Activated B cell treated with CpG ODN at 0.5 μM for 24 hours (primary cell): ENCODE measurements at regions of chr10 and their contacts with region 1.

Region 1: DNA sequence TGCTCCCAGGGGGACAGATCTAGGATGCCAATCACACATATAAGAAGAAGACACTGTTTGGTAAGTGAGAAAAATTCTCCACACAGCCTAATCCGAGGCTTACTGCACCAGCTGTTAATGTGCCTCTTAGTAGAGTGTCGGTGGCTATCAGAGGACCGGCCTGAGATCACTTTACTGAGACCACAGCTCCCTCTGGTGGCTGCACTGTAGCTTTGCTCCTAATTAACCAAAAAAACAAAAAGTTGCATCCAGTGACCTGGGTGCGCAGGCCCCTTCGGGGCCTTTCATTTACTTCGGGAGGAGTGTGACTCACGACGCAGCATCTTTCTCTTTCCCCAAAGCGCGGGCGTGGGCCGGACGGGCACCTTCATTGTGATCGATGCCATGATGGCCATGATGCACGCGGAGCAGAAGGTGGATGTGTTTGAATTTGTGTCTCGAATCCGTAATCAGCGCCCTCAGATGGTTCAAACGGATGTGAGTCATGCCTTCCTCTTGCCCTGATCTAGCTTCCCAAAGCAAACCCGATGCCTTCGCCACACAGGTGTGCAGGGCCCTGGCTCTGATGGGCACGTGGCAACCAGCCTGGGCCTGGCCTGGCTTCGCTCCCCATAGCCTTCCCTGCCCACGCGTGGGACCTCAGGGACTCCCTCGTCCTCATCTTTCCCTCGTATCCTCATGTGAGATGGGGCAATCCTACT is 56.7 kb downstream of the MKI67 start:
- DNase-seq: peak; percentile 67
- ATAC-seq: peak; percentile 13
- H3K4me3 Mint-ChIP-seq: no peak overlapping the region
- H3K27ac Mint-ChIP-seq: no peak overlapping the region
- H3K4me1 Mint-ChIP-seq: peaks cover 34% of the 10 kb centered on the region
- H3K27me3 Mint-ChIP-seq: no peaks in the 10 kb centered on the region
- CTCF ChIP-seq: no peak

Region 2: DNA sequence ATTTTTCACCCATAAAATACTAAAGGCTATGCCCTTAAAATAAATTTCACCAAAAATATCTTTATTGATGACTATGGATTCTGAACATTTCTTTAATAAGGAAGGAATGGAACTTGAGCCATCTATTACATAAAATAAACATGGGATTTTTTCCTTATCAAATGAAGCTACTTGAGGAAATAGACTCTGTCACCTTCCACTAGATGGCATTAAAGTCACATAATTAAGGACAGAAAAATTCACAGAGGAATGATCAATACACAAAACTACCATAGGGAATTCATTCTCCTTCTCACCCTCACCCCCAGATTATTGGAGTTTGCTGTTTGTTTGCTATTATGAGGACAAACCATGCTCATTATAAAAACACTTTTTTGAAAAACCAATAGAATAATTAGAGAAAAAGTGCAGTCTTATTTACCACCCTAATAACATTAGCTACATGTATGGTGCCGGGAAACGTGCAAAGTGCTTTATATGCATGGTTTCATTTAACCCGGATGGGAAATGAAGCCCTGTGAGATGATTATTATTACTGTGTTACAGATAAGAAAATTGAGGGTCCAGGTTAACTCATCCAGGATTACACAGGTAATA is 353.6 kb before region 1 on chr10:
- CTCF ChIA-PET with region 1: interaction called, 20 read pairs
- POLR2A ChIA-PET with region 1: no interaction called
- intact Hi-C with region 1: no loop called
- DNase-seq: no peak
- ATAC-seq: no peak
- H3K4me3 Mint-ChIP-seq: no peak overlapping the region
- H3K27ac Mint-ChIP-seq: no peak overlapping the region
- H3K4me1 Mint-ChIP-seq: no peaks in the 10 kb centered on the region
- H3K27me3 Mint-ChIP-seq: no peaks in the 10 kb centered on the region
- CTCF ChIP-seq: no peak

Region 3: GRCh38 chr10:127906548-127907377 is 162.7 kb before region 1 on chr10 and contains the start of gene PTPRE:
- CTCF ChIA-PET with region 1: interaction called, 36 read pairs
- POLR2A ChIA-PET with region 1: interaction called, 3 read pairs
- intact Hi-C with region 1: loop called (anchors 1 kb)
- DNase-seq: peak; percentile 71
- ATAC-seq: peak; percentile 98
- H3K4me3 Mint-ChIP-seq: peak within 1 kb of the TSS; percentile 29
- H3K27ac Mint-ChIP-seq: no peak within 1 kb of the TSS
- H3K4me1 Mint-ChIP-seq: no peaks in the 10 kb centered on the region
- H3K27me3 Mint-ChIP-seq: peaks cover 47% of the 10 kb centered on the region
- CTCF ChIP-seq: no peak
- total RNA-seq, gene PTPRE: 28.2 and 36.8 TPM in 2 replicates

Region 4: GRCh38 chr10:128035557-128035973 is 33.9 kb before region 1 on chr10:
- CTCF ChIA-PET with region 1: interaction called, 196 read pairs
- POLR2A ChIA-PET with region 1: interaction called, 16 read pairs
- intact Hi-C with region 1: loop called (anchors 1 kb)
- DNase-seq: peak; percentile 50
- ATAC-seq: peak; percentile 81
- H3K4me3 Mint-ChIP-seq: no peak overlapping the region
- H3K27ac Mint-ChIP-seq: no peak overlapping the region
- H3K4me1 Mint-ChIP-seq: no peaks in the 10 kb centered on the region
- H3K27me3 Mint-ChIP-seq: peaks cover 2% of the 10 kb centered on the region
- CTCF ChIP-seq: peak; percentile 18

Region 5: GRCh38 chr10:128047351-128047750 is 22.1 kb before region 1 on chr10:
- CTCF ChIA-PET with region 1: interaction called, 31 read pairs
- POLR2A ChIA-PET with region 1: interaction called, 162 read pairs
- intact Hi-C with region 1: loop called (anchors 1 kb)
- DNase-seq: peak; percentile 61
- ATAC-seq: peak; percentile 100
- H3K4me3 Mint-ChIP-seq: peak overlapping the region; percentile 85
- H3K27ac Mint-ChIP-seq: peak overlapping the region; percentile 81
- H3K4me1 Mint-ChIP-seq: peaks cover 55% of the 10 kb centered on the region
- H3K27me3 Mint-ChIP-seq: no peaks in the 10 kb centered on the region
- CTCF ChIP-seq: no peak